GM13977 (cell line): ENCODE measurements at regions of chr1 and their contacts with region 1.

Region 1: GRCh38 chr1:32939655-32940371 is 24.8 kb downstream of the RNF19B start:
- DNase-seq: no peak
- CTCF ChIP-seq: no peak

Region 2: GRCh38 chr1:32485554-32486255 is 454.1 kb before region 1 on chr1:
- in situ Hi-C with region 1: no loop called
- DNase-seq: no peak
- CTCF ChIP-seq: no peak

Region 3: GRCh38 chr1:33072707-33073106 is 132.9 kb after region 1 on chr1:
- in situ Hi-C with region 1: loop called (anchors 10 kb)
- DNase-seq: no peak
- CTCF ChIP-seq: no peak